Activated CD8-positive, alpha-beta T cell treated with anti-CD3 and anti-CD28 coated beads, Interleukin-2, amount 10 ng/mL, durations not matched to agents 7 days and 5 days (primary cell): ENCODE measurements at regions of chr6 and their contacts with region 1.

Region 1: GRCh38 chr6:106223300-106223930 is 102.1 kb downstream of the ATG5 start:
- DNase-seq: peak; percentile 87
- ATAC-seq: peak; percentile 87
- H3K4me3 Mint-ChIP-seq: no peak overlapping the region
- H3K27ac Mint-ChIP-seq: no peak overlapping the region
- H3K4me1 Mint-ChIP-seq: peaks cover 26% of the 10 kb centered on the region
- H3K27me3 Mint-ChIP-seq: no peaks in the 10 kb centered on the region

Region 2: DNA sequence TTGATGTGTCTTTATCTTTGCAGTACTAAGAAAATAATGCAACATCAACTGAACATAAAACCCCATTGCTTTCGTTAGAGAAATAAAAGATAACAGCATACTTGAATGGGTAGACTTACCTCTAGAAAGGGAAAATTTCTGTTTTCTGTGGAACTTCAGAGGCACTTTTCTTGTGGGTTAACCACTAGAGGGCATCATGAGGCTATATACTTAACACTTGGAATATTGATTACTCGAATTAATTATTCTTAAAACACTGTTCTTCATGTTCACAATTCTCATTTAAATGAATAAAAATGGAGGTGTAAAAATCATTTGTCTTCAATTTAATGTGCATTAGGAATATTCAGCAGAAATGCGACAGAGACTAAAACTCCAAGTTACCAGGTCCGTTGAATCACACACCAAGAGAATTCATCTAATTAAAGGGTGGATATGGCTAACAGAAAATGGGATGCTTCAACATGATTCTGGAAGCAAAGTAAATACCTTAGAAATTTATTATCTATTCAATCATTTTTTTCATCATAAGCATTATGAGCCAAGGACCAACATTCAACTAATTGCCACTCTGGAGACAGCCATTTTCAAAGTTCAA is 489.8 kb before region 1 on chr6:
- CTCF ChIA-PET with region 1: interaction called, 11 read pairs
- POLR2A ChIA-PET with region 1: no interaction called
- DNase-seq: no peak
- ATAC-seq: no peak
- H3K4me3 Mint-ChIP-seq: no peak overlapping the region
- H3K27ac Mint-ChIP-seq: no peak overlapping the region
- H3K4me1 Mint-ChIP-seq: peaks cover 16% of the 10 kb centered on the region
- H3K27me3 Mint-ChIP-seq: peaks cover 2% of the 10 kb centered on the region

Region 3: DNA sequence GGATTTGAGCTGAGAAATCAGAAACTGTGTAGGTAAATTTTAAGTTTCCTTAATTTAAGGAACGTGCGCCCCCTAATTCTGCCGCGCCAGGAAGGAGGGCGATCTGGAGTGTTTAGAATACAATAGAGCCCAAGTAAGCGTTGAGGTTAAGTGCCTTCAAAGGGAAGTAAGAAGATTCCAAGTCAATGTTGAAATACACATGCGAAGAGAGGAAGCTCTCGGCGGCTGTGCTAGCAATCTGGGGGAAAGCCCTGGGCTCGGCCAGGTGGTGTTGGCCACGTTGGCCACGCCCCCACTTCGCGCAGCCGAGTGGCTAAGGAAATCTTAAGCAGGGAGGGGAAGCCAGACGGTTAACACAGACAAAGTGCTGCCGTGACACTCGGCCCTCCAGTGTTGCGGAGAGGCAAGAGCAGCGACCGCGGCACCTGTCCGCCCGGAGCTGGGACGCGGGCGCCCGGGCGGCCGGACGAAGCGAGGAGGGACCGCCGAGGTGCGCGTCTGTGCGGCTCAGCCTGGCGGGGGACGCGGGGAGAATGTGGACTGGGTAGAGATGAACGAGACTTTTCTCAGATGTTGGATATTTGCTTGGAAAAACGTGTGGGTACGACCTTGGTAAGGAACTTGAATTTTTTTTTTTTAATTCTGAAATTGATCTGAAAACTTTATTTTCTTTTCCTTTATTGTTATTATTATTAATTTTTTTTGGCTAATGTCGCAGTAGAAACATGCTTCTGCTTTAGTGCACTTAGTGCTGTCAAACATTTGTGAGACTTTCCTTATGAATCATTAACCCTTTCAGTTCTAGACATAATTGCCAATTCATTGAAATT is 137.2 kb before region 1 on chr6 and contains the start of gene PRDM1:
- CTCF ChIA-PET with region 1: interaction called, 80 read pairs
- POLR2A ChIA-PET with region 1: no interaction called
- DNase-seq: peak; percentile 87
- ATAC-seq: peak; percentile 96
- H3K4me3 Mint-ChIP-seq: peak within 1 kb of the TSS; percentile 84
- H3K27ac Mint-ChIP-seq: peak within 1 kb of the TSS; percentile 70
- H3K4me1 Mint-ChIP-seq: peaks cover 70% of the 10 kb centered on the region
- H3K27me3 Mint-ChIP-seq: peaks cover 30% of the 10 kb centered on the region
- total RNA-seq, gene PRDM1: 14.4 to 14.7 TPM

Region 4: GRCh38 chr6:106103728-106104109 is 119.7 kb before region 1 on chr6:
- CTCF ChIA-PET with region 1: interaction called, 31 read pairs
- POLR2A ChIA-PET with region 1: interaction called, 3 read pairs
- DNase-seq: peak; percentile 56
- ATAC-seq: peak; percentile 74
- H3K4me3 Mint-ChIP-seq: peak overlapping the region; percentile 87
- H3K27ac Mint-ChIP-seq: peak overlapping the region; percentile 74
- H3K4me1 Mint-ChIP-seq: peaks cover 88% of the 10 kb centered on the region
- H3K27me3 Mint-ChIP-seq: no peaks in the 10 kb centered on the region

Region 5: GRCh38 chr6:106163446-106163965 is 59.9 kb before region 1 on chr6:
- CTCF ChIA-PET with region 1: interaction called, 37 read pairs
- POLR2A ChIA-PET with region 1: no interaction called
- DNase-seq: peak; percentile 71
- ATAC-seq: peak; percentile 84
- H3K4me3 Mint-ChIP-seq: peak overlapping the region; percentile 34
- H3K27ac Mint-ChIP-seq: peak overlapping the region; percentile 93
- H3K4me1 Mint-ChIP-seq: peaks cover 65% of the 10 kb centered on the region
- H3K27me3 Mint-ChIP-seq: no peaks in the 10 kb centered on the region

Region 6: DNA sequence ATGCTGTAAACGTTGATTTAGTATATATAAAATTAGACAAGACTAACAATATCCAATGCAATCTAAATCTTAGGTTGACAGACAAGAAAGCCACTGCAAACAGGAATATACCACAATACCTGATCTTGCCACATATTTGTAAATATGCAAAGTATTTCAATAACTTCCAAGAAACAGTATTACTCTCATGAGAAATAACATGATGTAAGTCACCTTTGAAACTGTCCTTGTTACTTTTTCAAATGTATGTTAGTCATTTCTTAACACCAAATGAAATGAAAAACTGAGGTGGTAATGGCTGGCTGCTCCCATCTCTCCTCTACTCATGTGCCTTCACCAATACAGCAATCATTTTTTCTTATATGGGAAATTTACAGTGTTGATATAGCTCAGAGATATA is 16.5 kb before region 1 on chr6:
- CTCF ChIA-PET with region 1: interaction called, 30 read pairs
- POLR2A ChIA-PET with region 1: no interaction called
- DNase-seq: no peak
- ATAC-seq: no peak
- H3K4me3 Mint-ChIP-seq: no peak overlapping the region
- H3K27ac Mint-ChIP-seq: no peak overlapping the region
- H3K4me1 Mint-ChIP-seq: peaks cover 16% of the 10 kb centered on the region
- H3K27me3 Mint-ChIP-seq: no peaks in the 10 kb centered on the region